Activated CD4-positive, alpha-beta memory T cell treated with anti-CD3 and anti-CD28 coated beads, Interleukin-2, amount 10 ng/mL, durations not matched to agents 7 days and 5 days (primary cell): ENCODE measurements at regions of chr11 and their contacts with region 1.

Region 1: DNA sequence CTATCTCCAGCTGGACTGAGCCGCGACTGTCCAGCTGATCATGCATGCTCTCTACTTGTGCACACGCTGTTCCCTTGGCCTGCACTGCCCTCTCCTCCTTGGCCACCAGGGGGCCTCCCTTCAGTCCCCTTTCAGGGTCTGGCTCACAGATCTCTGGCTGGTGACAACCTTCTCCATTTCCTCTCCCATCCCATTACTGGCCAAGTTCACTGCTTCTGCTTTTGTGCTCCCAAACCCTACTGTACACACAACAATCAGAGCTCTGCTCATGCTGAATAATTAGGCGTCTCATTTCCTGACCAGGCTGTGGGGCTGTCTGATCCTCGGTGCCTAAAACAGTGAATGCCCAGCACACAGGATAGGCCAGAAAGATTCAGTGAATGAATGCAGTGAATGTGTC is 224.0 kb upstream of the NARS2 start:
- DNase-seq: peak; percentile 34
- H3K4me3 Mint-ChIP-seq: no peak overlapping the region
- H3K27ac Mint-ChIP-seq: no peak overlapping the region
- H3K4me1 Mint-ChIP-seq: no peaks in the 10 kb centered on the region
- H3K27me3 Mint-ChIP-seq: no peaks in the 10 kb centered on the region

Region 2: DNA sequence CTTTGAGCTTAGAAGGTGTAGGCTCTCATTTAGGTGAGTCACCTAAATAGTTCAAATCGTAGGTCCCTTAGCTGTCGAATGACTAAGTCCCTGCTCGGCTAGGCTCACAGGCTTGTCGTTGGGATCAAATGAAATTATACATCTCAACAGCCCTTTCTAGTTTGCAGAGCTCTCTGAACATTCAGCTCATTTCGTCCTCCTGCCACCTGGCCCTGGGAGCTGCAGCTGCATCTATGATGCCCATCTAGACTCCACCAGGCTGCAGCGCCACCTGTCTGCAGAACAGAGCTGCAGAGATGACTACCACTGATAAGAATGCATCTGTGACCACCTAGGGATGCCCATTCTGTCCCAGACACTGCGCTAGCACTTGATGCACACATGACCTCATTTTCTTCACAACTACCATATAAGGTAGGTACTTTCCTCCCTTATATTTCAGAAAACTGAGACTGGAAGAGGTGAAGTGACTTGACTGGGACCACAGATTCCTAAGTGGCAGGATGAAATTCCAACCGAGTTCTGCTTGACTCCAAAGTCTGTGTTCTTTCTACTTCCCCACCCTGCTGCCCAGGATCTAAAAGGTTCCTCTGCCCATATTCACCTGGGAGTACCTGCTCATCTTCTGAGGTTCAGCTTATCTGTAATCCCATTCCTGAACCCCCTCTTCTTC is 82.9 kb before region 1 on chr11:
- CTCF ChIA-PET with region 1: no interaction called
- POLR2A ChIA-PET with region 1: no interaction called
- DNase-seq: peak; percentile 43
- H3K4me3 Mint-ChIP-seq: no peak overlapping the region
- H3K27ac Mint-ChIP-seq: no peak overlapping the region
- H3K4me1 Mint-ChIP-seq: no peaks in the 10 kb centered on the region
- H3K27me3 Mint-ChIP-seq: peaks cover 6% of the 10 kb centered on the region

Region 3: DNA sequence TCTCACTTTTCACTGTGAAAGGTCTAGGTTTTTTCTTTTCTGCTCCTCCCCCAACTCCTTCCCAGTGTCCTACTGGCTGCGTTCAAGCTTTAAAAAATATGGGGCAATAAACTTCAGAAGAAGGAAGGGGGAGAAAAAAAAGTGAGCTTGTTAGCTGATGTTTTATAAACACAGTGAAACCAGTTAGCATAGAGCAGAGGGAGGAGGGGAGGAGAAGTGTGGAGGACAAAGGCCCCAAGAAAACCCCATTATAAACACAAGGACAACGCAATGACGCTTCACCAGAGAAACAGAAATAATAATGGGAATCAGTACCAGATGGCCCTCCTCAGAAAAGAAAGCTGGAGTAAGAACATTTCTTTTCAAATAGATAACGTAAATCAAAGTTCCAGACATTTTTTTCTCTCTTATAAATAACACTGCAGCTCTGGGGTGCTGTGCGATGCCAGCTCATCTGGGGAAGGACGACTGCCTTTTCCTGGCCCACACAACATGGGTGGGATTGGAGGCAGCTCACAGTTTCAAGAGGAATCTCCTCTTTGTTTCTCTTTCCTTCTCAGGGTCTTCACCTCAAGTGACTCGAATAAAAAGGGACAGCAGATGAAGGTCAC is 11.4 kb after region 1 on chr11:
- CTCF ChIA-PET with region 1: interaction called, 10 read pairs
- POLR2A ChIA-PET with region 1: no interaction called
- DNase-seq: no peak
- H3K4me3 Mint-ChIP-seq: no peak overlapping the region
- H3K27ac Mint-ChIP-seq: no peak overlapping the region
- H3K4me1 Mint-ChIP-seq: no peaks in the 10 kb centered on the region
- H3K27me3 Mint-ChIP-seq: peaks cover 3% of the 10 kb centered on the region